ENCODE measurements at regions of chr6 and their contacts with region 1.

Region 1: DNA sequence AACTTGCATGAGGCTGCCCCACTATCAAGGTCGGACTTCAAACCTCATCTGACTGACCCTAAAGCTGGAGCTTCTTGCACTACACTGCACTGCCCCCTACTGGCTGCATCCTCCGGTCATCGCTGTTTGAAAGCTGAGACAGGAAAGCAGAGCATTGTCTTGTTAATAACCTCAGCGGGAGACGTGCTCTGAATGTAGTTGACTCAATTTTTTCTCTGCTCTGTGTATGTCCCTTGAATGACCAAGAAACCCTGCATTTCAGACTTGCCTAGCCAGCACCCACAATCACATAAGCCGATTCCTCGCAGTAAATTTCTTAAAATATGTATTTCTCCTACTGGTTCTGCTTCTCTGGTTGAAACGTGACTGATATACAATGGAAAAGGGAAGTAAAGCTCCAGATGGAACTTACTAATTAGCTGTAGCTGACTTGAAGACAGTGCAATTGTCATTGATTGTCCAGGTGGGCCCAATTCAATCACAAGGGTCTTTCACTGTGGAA is 27.8 kb downstream of the TCF21 start:
- DNase-seq: peak; percentile 78 to 97
- H3K4me3 ChIP-seq: no peak overlapping the region
- CTCF ChIP-seq: peak in 1 of 3 donors; percentile 53
- POLR2A ChIP-seq: no peak

Region 2: DNA sequence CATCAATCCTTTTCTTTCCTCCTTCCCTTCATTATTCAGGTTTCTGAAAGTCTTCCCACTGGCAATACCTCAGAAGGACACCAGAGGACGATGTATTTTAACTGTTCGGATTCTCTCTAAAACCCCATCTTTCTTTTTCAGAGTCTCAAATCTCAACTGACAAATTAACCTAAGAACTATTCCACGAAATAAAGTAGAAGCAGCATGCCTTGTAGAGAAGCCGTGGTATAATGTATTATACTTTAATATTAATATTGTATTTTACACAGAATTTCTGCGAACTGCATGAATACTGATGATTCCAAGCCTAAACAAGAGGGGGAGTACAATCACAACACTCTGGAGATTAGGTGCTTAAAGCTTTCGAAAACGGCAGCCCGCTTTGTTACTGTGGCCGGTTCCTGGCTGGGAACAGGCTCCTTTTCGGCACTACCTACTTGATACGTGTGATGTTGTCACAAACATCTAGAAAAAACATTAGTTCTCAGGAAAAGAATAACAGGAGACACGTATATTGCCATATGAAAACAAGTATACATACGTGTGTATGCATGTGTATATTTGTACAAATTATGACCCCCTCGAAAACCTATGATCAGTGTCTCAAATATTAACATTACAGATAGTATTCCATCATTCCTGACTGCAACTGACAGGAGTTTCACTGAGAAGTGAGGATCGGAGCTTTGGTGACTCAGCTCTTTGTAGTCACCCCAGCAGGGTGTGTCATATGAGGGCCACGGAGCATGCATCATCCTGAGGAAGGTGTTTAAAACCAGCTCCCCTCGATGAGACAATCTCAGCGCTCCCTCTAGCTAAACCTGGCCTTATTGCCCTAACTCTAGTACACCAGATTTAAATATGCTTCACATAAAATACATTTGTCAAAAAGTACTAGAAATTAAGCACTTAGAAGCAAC is 347.5 kb before region 1 on chr6:
- intact Hi-C with region 1: loop called (anchors 10 kb)
- DNase-seq: peak; percentile 25 to 72
- H3K4me3 ChIP-seq: no peak overlapping the region
- CTCF ChIP-seq: peak in 1 of 3 donors; percentile 87
- POLR2A ChIP-seq: no peak